ENCODE measurements at regions of chr11 and their contacts with region 1.

Region 1: DNA sequence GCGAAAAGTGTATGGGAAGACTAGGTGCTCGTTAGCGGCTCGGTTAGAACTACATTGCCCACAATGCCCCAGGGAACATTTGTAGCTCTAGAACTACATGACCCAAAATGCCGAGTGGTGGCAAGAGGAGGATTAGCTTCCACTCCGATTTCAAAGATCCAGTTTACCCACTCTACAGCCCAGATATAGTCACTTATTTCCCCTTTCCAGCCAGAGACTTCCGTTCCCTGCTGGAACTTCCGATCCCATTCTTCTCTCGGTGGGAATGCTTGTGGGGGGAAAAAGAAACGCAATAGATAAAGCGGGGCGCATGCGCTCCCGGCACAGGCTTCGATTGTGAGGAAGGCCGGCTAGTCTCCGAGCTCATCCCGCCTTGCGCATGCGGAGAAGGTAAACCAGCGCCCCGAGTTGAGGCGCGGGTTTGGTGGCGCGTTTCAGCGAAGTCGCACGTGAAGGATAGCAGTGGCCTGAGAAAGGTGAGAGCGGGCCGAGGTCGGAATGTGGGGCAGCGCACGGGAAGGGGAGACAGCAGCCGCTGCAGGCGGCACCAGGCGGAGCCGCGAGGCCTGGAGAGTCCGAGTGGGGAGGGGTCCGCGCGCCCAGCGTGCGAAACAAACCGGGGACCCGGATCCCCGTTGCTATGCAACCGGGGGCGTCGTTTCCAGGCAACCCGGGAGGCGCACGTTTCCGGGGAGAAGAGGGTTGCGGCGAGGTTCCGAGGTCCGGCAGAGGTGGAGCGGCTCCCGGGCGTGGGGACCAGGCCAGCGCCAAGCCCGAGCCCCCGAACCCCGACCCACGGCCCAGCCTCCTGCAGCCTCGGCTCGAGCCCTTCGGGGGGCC is at the start of gene TMEM109:
- DNase-seq: peak; percentile 75 to 95 (median 89)
- ATAC-seq: peak; percentile 55
- H3K4me3 ChIP-seq: peak within 1 kb of the TSS; percentile 66 to 85
- H3K4me3 Mint-ChIP-seq: peak within 1 kb of the TSS; percentile 95
- H3K27ac ChIP-seq: peak within 1 kb of the TSS; percentile 77 to 91
- H3K27ac Mint-ChIP-seq: peak within 1 kb of the TSS; percentile 97
- H3K4me1 ChIP-seq: peaks cover 40% of the 10 kb centered on the region
- H3K4me1 Mint-ChIP-seq: peaks cover 77% of the 10 kb centered on the region
- H3K27me3 ChIP-seq: no peaks in the 10 kb centered on the region
- H3K27me3 Mint-ChIP-seq: no peaks in the 10 kb centered on the region
- CTCF ChIP-seq: no peak
- total RNA-seq, gene TMEM109: 46.7 to 52.2 TPM

Region 2: DNA sequence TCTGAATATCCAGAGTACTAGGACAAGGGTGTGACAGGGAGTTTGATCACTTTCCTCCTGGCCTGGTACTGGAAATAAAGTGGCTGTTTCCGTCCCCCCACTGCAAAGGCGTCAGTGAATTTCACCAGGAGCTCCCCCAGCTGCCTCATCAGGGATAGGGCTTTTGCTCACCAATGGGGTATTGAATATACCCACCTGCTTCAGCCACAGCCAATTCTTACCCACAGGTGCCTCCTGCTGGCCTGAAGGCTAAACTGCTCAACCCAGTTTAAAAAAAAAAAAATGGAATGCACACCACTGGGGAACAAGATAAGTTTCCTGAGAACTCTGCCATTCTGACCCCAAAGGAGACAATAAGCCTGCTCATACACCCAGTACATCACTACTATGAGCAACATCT is 279.9 kb before region 1 on chr11:
- CTCF ChIA-PET with region 1: no interaction called
- POLR2A ChIA-PET with region 1: no interaction called
- intact Hi-C with region 1: no loop called
- DNase-seq: no peak
- ATAC-seq: no peak
- H3K4me3 ChIP-seq: no peak overlapping the region
- H3K4me3 Mint-ChIP-seq: no peak overlapping the region
- H3K27ac ChIP-seq: no peak overlapping the region
- H3K27ac Mint-ChIP-seq: no peak overlapping the region
- H3K4me1 ChIP-seq: no peaks in the 10 kb centered on the region
- H3K4me1 Mint-ChIP-seq: no peaks in the 10 kb centered on the region
- H3K27me3 ChIP-seq: peaks cover 2 to 12% of the 10 kb centered on the region in 2 experiments
- H3K27me3 Mint-ChIP-seq: peaks cover 22% of the 10 kb centered on the region
- CTCF ChIP-seq: no peak

Region 3: DNA sequence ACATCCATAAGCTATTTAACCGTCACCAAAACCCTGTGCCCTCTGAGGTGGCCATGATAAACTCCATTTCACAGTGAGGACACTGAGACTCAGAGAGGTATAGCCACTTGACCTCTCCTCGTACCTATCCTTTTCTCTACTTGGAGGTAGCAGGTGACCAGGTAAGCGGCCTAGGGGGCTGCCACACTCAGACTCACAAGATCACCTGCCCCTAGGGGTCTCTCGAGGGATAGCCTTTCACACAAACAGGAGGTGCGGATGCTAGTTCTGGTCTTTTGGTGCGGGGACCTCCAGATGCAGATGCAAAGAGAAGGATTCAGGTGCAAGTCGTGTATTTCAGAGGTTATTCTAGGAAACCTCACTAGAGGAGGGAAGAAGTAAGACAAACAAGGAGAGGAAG is 174.9 kb before region 1 on chr11:
- CTCF ChIA-PET with region 1: no interaction called
- POLR2A ChIA-PET with region 1: no interaction called
- intact Hi-C with region 1: no loop called
- DNase-seq: no peak
- ATAC-seq: no peak
- H3K4me3 ChIP-seq: no peak overlapping the region
- H3K4me3 Mint-ChIP-seq: no peak overlapping the region
- H3K27ac ChIP-seq: no peak overlapping the region
- H3K27ac Mint-ChIP-seq: no peak overlapping the region
- H3K4me1 ChIP-seq: no peaks in the 10 kb centered on the region
- H3K4me1 Mint-ChIP-seq: no peaks in the 10 kb centered on the region
- H3K27me3 ChIP-seq: no peaks in the 10 kb centered on the region
- H3K27me3 Mint-ChIP-seq: peaks cover 21% of the 10 kb centered on the region
- CTCF ChIP-seq: no peak

Region 4: GRCh38 chr11:60841797-60842667 is 72.0 kb before region 1 on chr11 and contains the start of gene CCDC86:
- CTCF ChIA-PET with region 1: interaction called, 3 read pairs
- POLR2A ChIA-PET with region 1: interaction called, 6 read pairs
- intact Hi-C with region 1: loop called (anchors 1 to 2 kb)
- DNase-seq: peak; percentile 97 to 100 (median 98)
- ATAC-seq: peak; percentile 97
- H3K4me3 ChIP-seq: peak within 1 kb of the TSS; percentile 84 to 93
- H3K4me3 Mint-ChIP-seq: peak within 1 kb of the TSS; percentile 93
- H3K27ac ChIP-seq: peak within 1 kb of the TSS; percentile 71 to 83
- H3K27ac Mint-ChIP-seq: peak within 1 kb of the TSS; percentile 97
- H3K4me1 ChIP-seq: peaks cover 35% of the 10 kb centered on the region
- H3K4me1 Mint-ChIP-seq: peaks cover 46% of the 10 kb centered on the region
- H3K27me3 ChIP-seq: no peaks in the 10 kb centered on the region
- H3K27me3 Mint-ChIP-seq: no peaks in the 10 kb centered on the region
- CTCF ChIP-seq: no peak
- total RNA-seq, gene CCDC86: 10.8 to 11.9 TPM

Region 5: DNA sequence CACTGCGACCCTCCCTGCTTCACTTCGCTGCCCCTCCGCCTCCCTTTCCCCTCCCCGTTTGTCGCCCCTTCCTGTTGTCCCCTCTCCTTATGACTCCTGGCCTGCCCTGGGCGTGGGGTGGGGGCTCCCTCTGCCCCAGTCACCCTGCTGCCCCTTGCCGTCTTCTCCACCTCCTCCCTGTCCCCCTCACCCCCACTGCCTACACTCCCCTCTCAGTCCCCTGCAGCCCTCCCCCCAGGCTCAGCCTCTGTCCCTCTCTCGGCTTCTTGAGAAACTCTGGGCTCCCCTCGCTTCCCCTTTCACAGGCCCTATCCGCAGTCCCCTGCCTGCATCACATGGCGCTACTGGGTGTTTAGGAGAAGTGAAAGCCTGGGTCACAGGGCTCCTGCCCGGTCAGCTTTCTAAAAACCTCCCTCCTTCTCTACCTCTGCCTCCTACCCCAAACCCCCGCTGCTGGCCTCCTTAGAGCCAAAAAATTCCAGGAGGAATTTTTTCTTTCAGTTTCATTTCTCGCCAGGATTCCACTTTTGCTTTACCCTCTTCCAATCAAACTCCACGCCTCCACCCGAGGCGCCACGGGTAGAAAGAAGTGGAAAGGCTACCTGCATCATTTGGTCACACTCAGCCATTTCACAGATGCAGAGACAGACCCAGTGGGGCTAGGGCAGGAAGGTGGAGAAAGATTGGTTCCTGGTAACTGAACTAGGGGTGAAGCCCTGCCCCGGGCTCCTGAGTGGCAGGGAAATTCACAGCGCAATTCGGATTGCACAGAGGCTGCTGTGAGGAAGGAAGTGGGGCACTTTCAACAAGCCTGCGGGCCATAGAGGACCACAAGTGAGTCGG is 38.1 kb after region 1 on chr11 and contains the start of gene SLC15A3:
- CTCF ChIA-PET with region 1: interaction called, 5 read pairs
- POLR2A ChIA-PET with region 1: interaction called, 4 read pairs
- intact Hi-C with region 1: loop called in 1 of 2 experiments (anchors 2 kb)
- DNase-seq: peak in 7 of 9 experiments; percentile 26 to 72 (median 51)
- ATAC-seq: peak; percentile 82
- H3K4me3 ChIP-seq: peak within 1 kb of the TSS; percentile 43 to 84
- H3K4me3 Mint-ChIP-seq: peak within 1 kb of the TSS; percentile 91
- H3K27ac ChIP-seq: peak within 1 kb of the TSS; percentile 56 to 60
- H3K27ac Mint-ChIP-seq: peak within 1 kb of the TSS; percentile 91
- H3K4me1 ChIP-seq: peaks cover 26% of the 10 kb centered on the region
- H3K4me1 Mint-ChIP-seq: peaks cover 29% of the 10 kb centered on the region
- H3K27me3 ChIP-seq: peaks cover 0 to 3% of the 10 kb centered on the region in 2 experiments
- H3K27me3 Mint-ChIP-seq: peaks cover 3% of the 10 kb centered on the region
- CTCF ChIP-seq: no peak
- total RNA-seq, gene SLC15A3: 6.3 to 9.0 TPM

Region 6: GRCh38 chr11:61120706-61121191 is 206.7 kb after region 1 on chr11:
- CTCF ChIA-PET with region 1: no interaction called
- POLR2A ChIA-PET with region 1: interaction called, 5 read pairs
- intact Hi-C with region 1: loop called (anchors 5 kb)
- DNase-seq: peak in 8 of 9 experiments; percentile 30 to 92 (median 70)
- ATAC-seq: peak; percentile 86
- H3K4me3 ChIP-seq: peak overlapping the region in 1 of 2 experiments; percentile 24
- H3K4me3 Mint-ChIP-seq: peak overlapping the region; percentile 76
- H3K27ac ChIP-seq: peak overlapping the region; percentile 73 to 76
- H3K27ac Mint-ChIP-seq: peak overlapping the region; percentile 96
- H3K4me1 ChIP-seq: peaks cover 35% of the 10 kb centered on the region
- H3K4me1 Mint-ChIP-seq: peaks cover 64% of the 10 kb centered on the region
- H3K27me3 ChIP-seq: peaks cover 0 to 4% of the 10 kb centered on the region in 2 experiments
- H3K27me3 Mint-ChIP-seq: no peaks in the 10 kb centered on the region
- CTCF ChIP-seq: no peak

Region 7: GRCh38 chr11:61361686-61362541 is 447.9 kb after region 1 on chr11 and contains the starts of genes CYB561A3 and TMEM138:
- CTCF ChIA-PET with region 1: no interaction called
- POLR2A ChIA-PET with region 1: interaction called, 3 read pairs
- intact Hi-C with region 1: loop called (anchors 10 kb)
- DNase-seq: peak; percentile 68 to 93 (median 87)
- ATAC-seq: peak; percentile 84
- H3K4me3 ChIP-seq: peak within 1 kb of the TSS; percentile 94 to 98
- H3K4me3 Mint-ChIP-seq: peak within 1 kb of the TSS; percentile 98
- H3K27ac ChIP-seq: peak within 1 kb of the TSS; percentile 87 to 98
- H3K27ac Mint-ChIP-seq: peak within 1 kb of the TSS; percentile 98
- H3K4me1 ChIP-seq: peaks cover 20% of the 10 kb centered on the region
- H3K4me1 Mint-ChIP-seq: peaks cover 37% of the 10 kb centered on the region
- H3K27me3 ChIP-seq: no peaks in the 10 kb centered on the region
- H3K27me3 Mint-ChIP-seq: no peaks in the 10 kb centered on the region
- CTCF ChIP-seq: no peak
- total RNA-seq, gene CYB561A3: 23.1 to 28.1 TPM
- total RNA-seq, gene TMEM138: 60.7 to 62.5 TPM

Region 8: DNA sequence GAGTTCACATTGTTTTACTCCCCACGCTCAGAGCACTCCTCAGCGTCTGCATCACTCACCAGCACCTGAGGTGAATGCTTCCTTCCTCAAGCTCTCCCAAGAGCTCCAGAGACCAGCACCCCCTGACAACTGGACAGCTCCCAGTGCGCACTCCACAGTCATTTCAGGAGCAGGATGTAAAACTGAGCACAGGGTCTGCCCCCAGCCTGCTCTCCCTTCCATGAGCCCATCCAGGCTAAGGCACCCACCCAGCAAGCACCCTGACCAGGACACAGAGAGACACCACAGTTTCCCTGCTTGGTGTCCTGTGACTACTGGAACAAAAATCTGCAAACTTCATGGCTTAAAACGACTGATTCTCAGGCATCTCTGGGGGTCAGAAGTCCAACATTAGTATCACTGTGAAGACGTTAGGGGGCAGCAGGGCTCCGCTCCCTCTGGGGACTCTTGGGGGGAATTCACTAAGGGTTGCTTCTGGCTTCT is 1331.3 kb after region 1 on chr11:
- CTCF ChIA-PET with region 1: no interaction called
- POLR2A ChIA-PET with region 1: no interaction called
- intact Hi-C with region 1: no loop called
- DNase-seq: peak in 2 of 9 experiments; percentile 3 to 13
- ATAC-seq: no peak
- H3K4me3 ChIP-seq: no peak overlapping the region
- H3K4me3 Mint-ChIP-seq: no peak overlapping the region
- H3K27ac ChIP-seq: no peak overlapping the region
- H3K27ac Mint-ChIP-seq: no peak overlapping the region
- H3K4me1 ChIP-seq: no peaks in the 10 kb centered on the region
- H3K4me1 Mint-ChIP-seq: no peaks in the 10 kb centered on the region
- H3K27me3 ChIP-seq: peaks cover 0 to 2% of the 10 kb centered on the region in 2 experiments
- H3K27me3 Mint-ChIP-seq: peaks cover 40% of the 10 kb centered on the region
- CTCF ChIP-seq: no peak